Ascending aorta (tissue), 2 donors: ENCODE measurements at regions of chr11 and their contacts with region 1.

Region 1: GRCh38 chr11:60775420-60775961 is 9.6 kb upstream of the MS4A10 start:
- DNase-seq: peak in 1 of 2 donors; percentile 88
- H3K4me3 ChIP-seq: no peak overlapping the region
- H3K27ac ChIP-seq: no peak overlapping the region
- H3K4me1 ChIP-seq: peaks cover 0 to 3% of the 10 kb centered on the region in 2 donors
- H3K27me3 ChIP-seq: no peaks in the 10 kb centered on the region
- CTCF ChIP-seq: peak; percentile 57 to 89 (median 84)

Region 2: GRCh38 chr11:60680455-60681119 is 94.9 kb before region 1 on chr11:
- intact Hi-C with region 1: no loop called
- DNase-seq: no peak
- H3K4me3 ChIP-seq: no peak overlapping the region
- H3K27ac ChIP-seq: no peak overlapping the region
- H3K4me1 ChIP-seq: no peaks in the 10 kb centered on the region
- H3K27me3 ChIP-seq: no peaks in the 10 kb centered on the region
- CTCF ChIP-seq: no peak

Region 3: DNA sequence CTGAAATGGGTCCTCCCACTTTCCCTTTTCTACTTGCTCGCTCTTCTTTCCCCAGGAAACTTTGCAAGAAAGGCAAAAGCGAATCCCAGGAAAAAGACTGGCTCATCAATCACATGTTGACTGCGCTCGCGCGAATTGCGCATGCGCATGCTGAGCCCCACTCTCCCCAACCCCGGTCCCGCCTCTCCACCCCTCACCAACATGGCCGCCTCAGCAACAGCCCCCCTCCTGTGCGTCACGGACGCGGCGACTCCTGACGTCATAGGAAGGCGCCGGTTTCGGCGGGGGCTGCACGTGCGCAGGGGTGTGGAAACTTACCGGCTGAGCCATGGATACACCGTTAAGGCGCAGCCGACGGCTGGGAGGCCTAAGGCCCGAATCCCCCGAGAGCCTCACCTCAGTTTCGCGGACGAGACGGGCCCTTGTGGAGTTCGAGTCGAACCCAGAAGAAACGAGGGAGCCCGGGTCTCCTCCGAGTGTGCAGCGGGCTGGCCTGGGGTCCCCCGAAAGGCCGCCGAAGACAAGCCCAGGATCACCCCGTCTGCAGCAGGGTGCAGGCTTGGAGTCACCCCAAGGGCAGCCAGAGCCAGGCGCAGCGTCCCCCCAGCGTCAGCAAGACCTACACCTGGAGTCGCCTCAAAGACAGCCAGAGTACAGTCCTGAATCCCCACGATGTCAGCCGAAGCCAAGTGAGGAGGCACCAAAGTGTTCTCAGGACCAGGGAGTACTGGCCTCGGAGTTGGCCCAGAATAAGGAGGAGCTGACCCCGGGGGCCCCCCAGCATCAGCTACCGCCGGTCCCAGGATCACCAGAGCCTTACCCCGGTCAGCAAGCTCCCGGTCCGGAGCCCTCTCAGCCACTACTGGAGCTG is 66.5 kb after region 1 on chr11 and contains the start of gene CCDC86:
- intact Hi-C with region 1: loop called (anchors 2 kb)
- DNase-seq: peak; percentile 90 to 98
- H3K4me3 ChIP-seq: peak within 1 kb of the TSS; percentile 76 to 94
- H3K27ac ChIP-seq: peak within 1 kb of the TSS; percentile 66 to 73
- H3K4me1 ChIP-seq: peaks cover 19 to 24% of the 10 kb centered on the region in 2 donors
- H3K27me3 ChIP-seq: no peaks in the 10 kb centered on the region
- CTCF ChIP-seq: no peak
- total RNA-seq, gene CCDC86: 16.0 TPM

Region 4: DNA sequence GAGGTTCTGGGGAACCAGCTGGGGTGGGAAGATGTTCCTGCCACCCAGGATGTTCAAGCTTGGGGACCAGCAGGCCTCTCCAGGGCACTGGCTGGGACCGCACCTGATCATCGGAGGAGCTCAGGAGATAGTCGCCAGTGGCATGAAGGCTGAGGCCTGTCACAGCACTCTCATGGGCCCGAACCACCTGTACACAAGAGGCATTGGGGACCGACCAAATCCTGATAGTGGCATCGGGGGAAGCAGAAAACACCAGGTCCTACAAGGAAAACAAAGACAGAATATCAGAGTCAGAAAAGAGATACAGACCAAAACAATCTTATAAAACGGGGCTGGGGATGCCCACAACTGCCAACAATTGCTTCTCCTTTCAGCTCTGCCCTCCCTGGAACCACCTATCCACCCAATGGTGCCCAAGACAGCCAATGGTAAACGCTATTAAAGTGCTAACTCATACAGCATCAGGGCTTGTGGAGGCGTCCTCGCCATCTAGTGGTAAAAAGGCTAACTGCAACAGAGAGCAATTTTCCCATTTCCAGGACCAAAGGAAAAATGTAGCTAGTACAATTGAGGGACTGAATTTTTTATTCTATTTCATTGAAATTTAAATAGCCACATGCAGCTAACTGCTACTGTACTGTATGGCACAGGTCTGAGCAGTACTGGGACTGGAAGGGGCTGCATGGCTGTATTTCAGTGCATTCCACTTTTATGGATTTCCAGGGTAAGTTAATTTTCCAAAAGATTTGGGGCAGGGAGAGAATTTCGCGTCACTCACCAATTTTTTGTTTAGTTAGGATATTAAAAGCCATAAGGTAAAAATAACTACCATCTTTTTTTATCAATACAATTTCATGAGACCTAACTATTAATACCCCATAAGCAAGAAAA is 123.8 kb after region 1 on chr11:
- intact Hi-C with region 1: loop called (anchors 5 kb)
- DNase-seq: no peak
- H3K4me3 ChIP-seq: no peak overlapping the region
- H3K27ac ChIP-seq: no peak overlapping the region
- H3K4me1 ChIP-seq: no peaks in the 10 kb centered on the region
- H3K27me3 ChIP-seq: no peaks in the 10 kb centered on the region
- CTCF ChIP-seq: peak; percentile 70 to 97 (median 95)